ENCODE measurements at regions of chr15 and their contacts with region 1.

Region 1: GRCh38 chr15:72397796-72398588 is at the start of gene TMEM202:
- DNase-seq: no peak
- total RNA-seq, gene TMEM202: not detected

Region 2: GRCh38 chr15:70535071-70535954 is 1862.7 kb before region 1 on chr15:
- intact Hi-C with region 1: loop called in 1 of 2 experiments (anchors 10 kb)
- DNase-seq: no peak

Region 3: GRCh38 chr15:72365844-72366243 is 32.1 kb before region 1 on chr15:
- intact Hi-C with region 1: no loop called
- DNase-seq: no peak